PC-9 (cell line): ENCODE measurements at regions of chr16 and their contacts with region 1.

Region 1: DNA sequence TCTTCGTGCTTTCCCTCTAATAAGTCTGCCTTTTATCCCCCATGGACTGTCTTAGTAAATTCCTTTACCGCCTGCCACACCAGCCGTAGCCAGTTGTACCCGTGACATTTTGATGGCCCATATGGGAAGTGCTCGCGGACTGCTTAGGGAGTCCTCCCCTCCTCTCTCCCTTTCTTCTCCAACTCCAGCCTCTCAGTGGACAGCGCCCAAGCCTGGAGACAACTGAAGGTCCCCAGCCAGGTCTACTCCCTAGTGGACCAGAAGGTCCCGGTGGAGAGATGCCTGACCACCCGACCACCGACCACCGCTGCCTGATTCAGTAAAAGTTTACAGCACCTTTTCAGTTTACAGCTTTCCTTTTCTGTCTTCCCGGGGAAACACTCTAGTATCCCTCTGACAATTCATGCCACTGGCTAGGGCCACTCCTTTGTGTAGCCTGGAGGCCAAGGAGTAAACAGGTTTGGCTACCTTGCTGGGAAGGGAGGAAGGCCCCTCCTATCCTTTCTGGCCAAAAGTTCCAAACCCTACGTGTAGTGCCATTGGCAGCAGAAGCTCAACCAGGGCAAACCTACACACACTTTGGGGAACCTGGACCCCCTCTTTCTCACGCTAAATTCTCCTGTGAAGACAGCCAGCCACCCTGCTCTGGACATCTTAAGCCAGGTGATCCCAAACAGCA is 18.0 kb downstream of the CTRB2 start:
- DNase-seq: peak; percentile 58 to 74
- H3K4me3 ChIP-seq: no peak overlapping the region; the same call in 1 of the 2 replicates
- H3K27ac ChIP-seq: no peak overlapping the region
- H3K4me1 ChIP-seq: peaks cover 24% of the 10 kb centered on the region
- H3K27me3 ChIP-seq: no peaks in the 10 kb centered on the region
- CTCF ChIP-seq: no peak

Region 2: GRCh38 chr16:74709441-74709877 is 479.5 kb before region 1 on chr16:
- CTCF ChIA-PET with region 1: no interaction called
- POLR2A ChIA-PET with region 1: no interaction called
- intact Hi-C with region 1: loop called (anchors 5 kb)
- DNase-seq: peak; percentile 79 to 81
- H3K4me3 ChIP-seq: no peak overlapping the region
- H3K27ac ChIP-seq: no peak overlapping the region
- H3K4me1 ChIP-seq: peaks cover 4% of the 10 kb centered on the region; the same call in 1 of the 2 replicates
- H3K27me3 ChIP-seq: no peaks in the 10 kb centered on the region
- CTCF ChIP-seq: peak; percentile 98